ENCODE measurements at regions of chr12 and their contacts with region 1.

Region 1: GRCh38 chr12:92034858-92035401 is 110.7 kb downstream of the BTG1 start:
- DNase-seq: peak; percentile 50
- ATAC-seq: peak; percentile 91
- H3K4me3 Mint-ChIP-seq: peak overlapping the region; percentile 67
- H3K27ac Mint-ChIP-seq: peak overlapping the region; percentile 86
- H3K4me1 Mint-ChIP-seq: peaks cover 65% of the 10 kb centered on the region
- H3K27me3 Mint-ChIP-seq: no peaks in the 10 kb centered on the region
- CTCF ChIP-seq: no peak

Region 2: GRCh38 chr12:92049403-92049802 is 14.5 kb after region 1 on chr12:
- CTCF ChIA-PET with region 1: interaction called, 3 read pairs
- POLR2A ChIA-PET with region 1: interaction called, 5 read pairs
- intact Hi-C with region 1: loop called (anchors 1 kb)
- DNase-seq: no peak
- ATAC-seq: peak; percentile 90
- H3K4me3 Mint-ChIP-seq: peak overlapping the region; percentile 16
- H3K27ac Mint-ChIP-seq: peak overlapping the region; percentile 7
- H3K4me1 Mint-ChIP-seq: peaks cover 33% of the 10 kb centered on the region
- H3K27me3 Mint-ChIP-seq: no peaks in the 10 kb centered on the region
- CTCF ChIP-seq: no peak

Region 3: GRCh38 chr12:92065018-92065499 is 30.1 kb after region 1 on chr12:
- CTCF ChIA-PET with region 1: no interaction called
- POLR2A ChIA-PET with region 1: no interaction called
- intact Hi-C with region 1: loop called (anchors 2 kb)
- DNase-seq: no peak
- ATAC-seq: peak; percentile 66
- H3K4me3 Mint-ChIP-seq: peak overlapping the region; percentile 73
- H3K27ac Mint-ChIP-seq: peak overlapping the region; percentile 85
- H3K4me1 Mint-ChIP-seq: peaks cover 61% of the 10 kb centered on the region
- H3K27me3 Mint-ChIP-seq: no peaks in the 10 kb centered on the region
- CTCF ChIP-seq: no peak

Measured in activated B cell treated with CpG ODN at 0.5 μM for 24 hours (primary cell).